ENCODE measurements at regions of chr12 and their contacts with region 1.

Region 1: DNA sequence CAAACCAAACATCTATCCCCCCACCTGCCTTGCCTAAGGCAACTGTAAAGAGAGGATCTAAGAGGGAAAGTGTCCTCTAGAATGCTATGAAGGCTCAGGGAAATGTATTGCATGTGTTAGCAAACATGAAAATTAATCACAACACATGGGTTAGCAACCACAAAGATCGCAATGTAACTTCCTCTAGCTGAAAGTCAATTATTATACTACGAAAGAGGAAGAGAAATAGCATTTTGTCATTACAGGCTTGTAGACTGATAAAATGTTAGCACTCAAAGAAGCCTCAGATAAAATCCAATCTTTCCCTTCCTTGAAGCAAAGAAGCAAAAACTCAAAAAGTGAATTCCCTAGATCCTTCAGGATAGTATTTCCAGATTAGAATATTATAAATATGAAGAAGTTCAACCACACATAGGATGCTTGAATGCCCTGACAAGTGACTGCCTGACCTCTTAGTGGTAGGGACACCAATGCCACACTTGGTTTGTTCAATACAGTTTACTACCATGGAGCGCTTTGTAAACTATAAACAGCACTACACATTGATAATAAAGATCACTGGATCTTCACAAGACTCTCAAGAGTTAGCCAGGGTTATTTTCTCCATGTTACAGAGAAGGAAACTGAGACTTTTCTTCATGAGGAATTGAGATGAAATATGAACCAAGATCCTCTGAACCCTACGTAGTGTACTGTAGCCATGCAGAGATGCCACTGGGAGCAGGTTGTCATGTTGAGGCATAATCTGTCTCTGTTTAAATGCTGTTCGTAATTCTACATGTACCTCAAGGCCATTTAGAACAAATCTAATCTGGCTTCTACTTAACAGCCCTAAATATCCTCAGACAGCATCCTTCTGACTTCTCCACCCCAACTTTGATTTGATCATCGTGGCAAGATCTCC is 100.7 kb downstream of the ITPR2 start:
- DNase-seq: no peak
- H3K4me3 Mint-ChIP-seq: no peak overlapping the region
- H3K27ac Mint-ChIP-seq: no peak overlapping the region
- H3K4me1 Mint-ChIP-seq: peaks cover 29% of the 10 kb centered on the region
- H3K27me3 Mint-ChIP-seq: no peaks in the 10 kb centered on the region
- CTCF ChIP-seq: no peak

Region 2: GRCh38 chr12:26768611-26769603 is 36.6 kb after region 1 on chr12:
- CTCF ChIA-PET with region 1: no interaction called
- intact Hi-C with region 1: loop called (anchors 5 kb)
- DNase-seq: peak; percentile 48
- H3K4me3 Mint-ChIP-seq: no peak overlapping the region
- H3K27ac Mint-ChIP-seq: no peak overlapping the region
- H3K4me1 Mint-ChIP-seq: peaks cover 23% of the 10 kb centered on the region
- H3K27me3 Mint-ChIP-seq: peaks cover 76% of the 10 kb centered on the region
- CTCF ChIP-seq: no peak

Region 3: DNA sequence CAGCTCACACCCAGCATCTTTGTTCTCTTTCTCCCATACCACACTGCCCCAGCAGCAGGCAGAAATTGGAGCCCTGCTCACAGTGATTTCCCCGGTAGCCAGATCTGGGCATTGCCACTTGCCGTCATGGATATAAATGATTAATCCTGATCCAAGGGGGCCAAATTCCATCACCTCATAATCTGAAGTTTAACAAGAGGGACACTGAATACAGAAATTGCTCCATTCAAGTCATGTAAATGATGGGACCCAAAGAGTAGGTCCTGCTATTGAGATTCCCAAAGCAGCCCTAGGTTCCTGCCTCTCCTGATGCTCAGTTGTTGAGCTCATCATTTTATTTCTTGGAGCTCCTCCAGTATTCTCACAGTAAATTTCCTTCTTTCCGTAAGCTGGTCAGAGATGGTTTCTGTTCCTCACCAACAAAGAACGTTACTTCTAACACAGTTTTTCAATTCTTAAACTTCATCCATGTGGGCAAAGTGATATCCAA is 89.0 kb after region 1 on chr12:
- CTCF ChIA-PET with region 1: no interaction called
- intact Hi-C with region 1: loop called (anchors 5 kb)
- DNase-seq: no peak
- H3K4me3 Mint-ChIP-seq: no peak overlapping the region
- H3K27ac Mint-ChIP-seq: no peak overlapping the region
- H3K4me1 Mint-ChIP-seq: peaks cover 12% of the 10 kb centered on the region
- H3K27me3 Mint-ChIP-seq: peaks cover 2% of the 10 kb centered on the region
- CTCF ChIP-seq: no peak

Region 4: DNA sequence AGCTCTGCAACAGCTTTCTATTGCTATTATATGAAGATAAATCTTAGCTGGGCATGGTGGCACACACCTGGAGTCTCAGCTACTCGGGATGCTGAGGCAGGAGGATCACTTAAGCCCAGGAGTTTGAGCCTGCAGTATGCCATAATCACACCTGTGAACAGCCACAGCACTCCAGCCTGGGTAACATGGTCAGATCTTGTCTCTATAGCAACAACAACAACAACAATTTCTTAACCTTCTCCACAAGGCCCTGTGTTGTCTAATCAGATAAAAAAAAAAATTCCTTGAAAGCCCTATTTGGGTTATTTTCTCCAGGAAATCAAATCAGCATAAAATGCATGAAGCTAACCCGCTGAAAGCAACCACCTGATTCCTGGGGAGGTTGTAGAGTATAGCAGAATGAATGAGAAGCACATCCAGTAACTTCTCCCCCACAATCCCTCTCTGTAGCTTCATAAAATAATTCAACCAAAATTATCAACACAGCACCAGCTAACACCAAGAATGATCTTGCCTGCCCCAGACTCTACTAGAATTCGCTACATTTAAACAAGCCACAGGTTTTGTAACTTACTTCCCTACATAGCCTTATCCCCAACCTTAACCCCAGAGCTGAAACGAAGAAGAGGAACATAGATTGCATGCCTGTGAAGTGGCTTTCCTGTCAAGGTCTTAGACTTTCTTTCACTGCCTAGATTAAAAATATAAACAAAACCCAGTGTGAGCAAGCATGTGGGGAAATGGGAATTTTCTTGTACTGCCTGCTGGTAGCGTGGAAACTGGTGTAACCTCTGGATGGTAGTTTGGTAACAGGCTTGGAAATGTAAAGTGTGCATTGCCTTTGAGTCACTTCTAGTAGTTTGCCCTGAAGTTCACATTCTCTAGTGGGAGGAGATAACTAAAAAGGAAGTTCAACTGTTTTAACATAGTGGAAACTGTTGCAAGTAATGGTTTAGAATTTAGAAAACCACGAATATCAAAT is 505.8 kb after region 1 on chr12:
- CTCF ChIA-PET with region 1: no interaction called
- intact Hi-C with region 1: no loop called
- DNase-seq: no peak
- H3K4me3 Mint-ChIP-seq: no peak overlapping the region
- H3K27ac Mint-ChIP-seq: no peak overlapping the region
- H3K4me1 Mint-ChIP-seq: no peaks in the 10 kb centered on the region
- H3K27me3 Mint-ChIP-seq: no peaks in the 10 kb centered on the region
- CTCF ChIP-seq: no peak